Activated CD4-positive, alpha-beta T cell treated with anti-CD3 and anti-CD28 coated beads for 36 hours (primary cell): ENCODE measurements at regions of chr2 and their contacts with region 1.

Region 1: DNA sequence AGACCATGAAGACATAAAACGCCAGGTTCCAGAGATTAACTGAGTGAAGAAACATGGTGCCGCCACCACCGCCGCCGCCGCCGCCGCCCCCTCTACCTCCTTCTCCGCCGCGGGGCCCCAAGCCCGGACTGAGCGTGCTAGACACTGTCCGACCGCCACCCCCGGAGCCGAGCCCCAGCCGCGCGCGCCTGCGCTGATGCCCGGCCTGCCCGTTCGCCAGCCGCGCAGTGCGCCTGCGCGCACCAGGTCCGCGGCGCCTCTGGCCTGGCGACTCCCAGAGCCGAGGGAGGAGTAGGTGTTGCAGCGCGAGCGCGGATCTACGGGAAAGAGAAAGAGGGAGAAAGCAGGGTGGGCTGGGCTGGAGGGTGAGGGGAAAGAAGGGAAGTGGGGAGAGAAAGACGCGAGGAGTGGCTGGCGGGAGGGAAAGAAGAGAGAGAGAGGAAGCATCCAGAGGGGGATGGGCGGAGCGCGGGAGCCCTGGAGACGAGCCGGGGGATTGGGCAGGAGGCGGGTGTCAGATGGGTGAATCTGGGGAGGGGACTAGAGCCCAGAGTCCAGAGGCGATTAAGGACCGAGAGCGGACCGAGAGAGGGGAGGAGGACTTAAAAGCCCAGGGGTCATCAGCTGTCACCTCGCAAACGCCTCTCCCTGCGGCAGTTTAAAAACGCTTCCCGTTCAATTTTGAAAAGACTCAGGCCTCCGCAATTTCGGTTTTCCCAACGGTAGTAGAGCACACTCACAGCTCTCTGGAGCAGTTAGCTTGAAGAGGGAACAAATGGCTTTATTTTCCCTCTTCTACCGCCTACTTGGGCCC is at the start of gene PGAP1:
- DNase-seq: peak; percentile 94
- ATAC-seq: peak; percentile 80
- H3K4me3 Mint-ChIP-seq: peak within 1 kb of the TSS; percentile 92
- H3K27ac Mint-ChIP-seq: peak within 1 kb of the TSS; percentile 99
- H3K4me1 Mint-ChIP-seq: peaks cover 31% of the 10 kb centered on the region
- H3K27me3 Mint-ChIP-seq: no peaks in the 10 kb centered on the region
- total RNA-seq, gene PGAP1: 22.2 to 25.1 TPM

Region 2: DNA sequence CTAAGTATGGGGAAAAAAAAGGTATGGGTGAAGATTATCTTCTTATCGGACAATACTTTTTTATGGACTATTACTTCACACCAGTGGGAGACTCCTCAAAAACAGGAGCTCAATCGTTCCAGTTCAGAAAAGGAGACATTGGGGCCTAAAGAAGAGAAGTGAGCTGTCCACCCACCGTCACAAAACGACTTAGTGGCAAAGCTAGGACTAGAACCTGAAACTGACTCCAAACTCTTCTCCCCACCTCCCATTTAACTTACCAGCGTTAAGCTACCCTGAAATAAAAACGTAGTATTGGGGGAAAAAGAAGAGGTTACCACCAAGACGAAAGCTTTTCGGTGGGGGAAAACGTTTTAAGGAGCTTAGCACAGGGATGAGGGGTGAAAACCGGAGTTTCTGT is 127.8 kb before region 1 on chr2:
- CTCF ChIA-PET with region 1: interaction called, 4 read pairs
- POLR2A ChIA-PET with region 1: interaction called, 3 read pairs
- intact Hi-C with region 1: loop called in 1 of 2 experiments (anchors 1 kb)
- DNase-seq: no peak
- ATAC-seq: peak; percentile 5
- H3K4me3 Mint-ChIP-seq: peak overlapping the region; percentile 85
- H3K27ac Mint-ChIP-seq: peak overlapping the region; percentile 97
- H3K4me1 Mint-ChIP-seq: peaks cover 38% of the 10 kb centered on the region
- H3K27me3 Mint-ChIP-seq: peaks cover 2% of the 10 kb centered on the region

Region 3: GRCh38 chr2:196961889-196962288 is 35.1 kb after region 1 on chr2:
- CTCF ChIA-PET with region 1: interaction called, 5 read pairs
- POLR2A ChIA-PET with region 1: interaction called, 11 read pairs
- intact Hi-C with region 1: loop called (anchors 1 kb)
- DNase-seq: peak; percentile 22
- ATAC-seq: peak; percentile 89
- H3K4me3 Mint-ChIP-seq: no peak overlapping the region
- H3K27ac Mint-ChIP-seq: peak overlapping the region; percentile 58
- H3K4me1 Mint-ChIP-seq: peaks cover 31% of the 10 kb centered on the region
- H3K27me3 Mint-ChIP-seq: no peaks in the 10 kb centered on the region

Region 4: DNA sequence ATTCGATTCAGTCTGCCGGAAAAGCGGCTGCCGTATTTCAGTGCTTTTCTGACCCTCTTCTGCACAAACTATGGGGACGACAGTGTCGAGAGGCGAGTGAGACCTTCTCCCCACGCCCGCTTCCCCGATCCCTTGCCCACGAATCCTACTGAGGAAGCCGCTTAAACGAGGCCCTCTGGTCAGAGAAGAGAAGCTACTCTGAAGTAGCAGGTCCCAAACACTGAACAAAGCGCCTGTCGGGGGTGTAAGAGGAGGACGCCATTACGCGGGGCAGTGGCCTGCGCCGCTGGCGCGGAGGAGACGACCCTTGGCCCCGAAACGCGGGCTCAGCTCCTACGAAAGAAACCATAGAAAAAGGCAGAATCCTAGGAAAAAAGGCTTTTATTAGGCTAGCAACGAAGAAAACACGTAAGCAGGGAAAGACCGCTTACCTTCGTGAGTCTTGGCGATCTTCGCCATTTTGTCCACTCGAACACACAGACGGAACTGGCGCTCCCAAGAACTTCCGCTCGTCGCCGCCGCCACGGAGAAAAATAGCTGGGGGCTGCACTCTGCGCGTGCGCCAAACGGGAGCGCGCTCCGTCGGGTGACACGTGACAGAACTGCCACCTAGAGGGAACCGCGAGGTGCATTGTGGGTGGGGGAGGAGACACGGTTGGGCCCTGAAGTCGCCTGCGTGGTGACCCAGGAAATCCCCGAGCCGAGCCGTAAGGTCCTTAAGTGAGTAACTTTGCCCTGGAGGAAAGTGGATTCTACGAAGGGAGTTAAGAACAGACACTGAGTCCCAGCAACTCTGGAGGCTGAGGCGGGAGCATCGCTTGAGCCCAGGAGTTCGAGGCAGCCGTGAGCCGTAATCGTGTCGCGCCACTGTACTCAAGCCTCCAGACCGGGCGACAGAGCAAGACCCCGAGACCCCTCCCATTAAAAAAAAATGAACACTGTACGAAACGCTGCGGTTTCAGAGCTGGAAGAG is 508.1 kb after region 1 on chr2 and contains the start of gene SF3B1:
- CTCF ChIA-PET with region 1: no interaction called
- POLR2A ChIA-PET with region 1: no interaction called
- intact Hi-C with region 1: loop called in 1 of 2 experiments (anchors 5 kb)
- DNase-seq: peak; percentile 100
- ATAC-seq: peak; percentile 94
- H3K4me3 Mint-ChIP-seq: peak within 1 kb of the TSS; percentile 98
- H3K27ac Mint-ChIP-seq: peak within 1 kb of the TSS; percentile 99
- H3K4me1 Mint-ChIP-seq: peaks cover 44% of the 10 kb centered on the region
- H3K27me3 Mint-ChIP-seq: no peaks in the 10 kb centered on the region
- total RNA-seq, gene SF3B1: 262 to 277 TPM

Region 5: GRCh38 chr2:197828464-197829135 is 901.8 kb after region 1 on chr2:
- CTCF ChIA-PET with region 1: no interaction called
- POLR2A ChIA-PET with region 1: no interaction called
- intact Hi-C with region 1: no loop called
- DNase-seq: no peak
- ATAC-seq: no peak
- H3K4me3 Mint-ChIP-seq: no peak overlapping the region
- H3K27ac Mint-ChIP-seq: no peak overlapping the region
- H3K4me1 Mint-ChIP-seq: peaks cover 8% of the 10 kb centered on the region
- H3K27me3 Mint-ChIP-seq: no peaks in the 10 kb centered on the region